PC-9 (cell line): ENCODE measurements at regions of chr9 and their contacts with region 1.

Region 1: DNA sequence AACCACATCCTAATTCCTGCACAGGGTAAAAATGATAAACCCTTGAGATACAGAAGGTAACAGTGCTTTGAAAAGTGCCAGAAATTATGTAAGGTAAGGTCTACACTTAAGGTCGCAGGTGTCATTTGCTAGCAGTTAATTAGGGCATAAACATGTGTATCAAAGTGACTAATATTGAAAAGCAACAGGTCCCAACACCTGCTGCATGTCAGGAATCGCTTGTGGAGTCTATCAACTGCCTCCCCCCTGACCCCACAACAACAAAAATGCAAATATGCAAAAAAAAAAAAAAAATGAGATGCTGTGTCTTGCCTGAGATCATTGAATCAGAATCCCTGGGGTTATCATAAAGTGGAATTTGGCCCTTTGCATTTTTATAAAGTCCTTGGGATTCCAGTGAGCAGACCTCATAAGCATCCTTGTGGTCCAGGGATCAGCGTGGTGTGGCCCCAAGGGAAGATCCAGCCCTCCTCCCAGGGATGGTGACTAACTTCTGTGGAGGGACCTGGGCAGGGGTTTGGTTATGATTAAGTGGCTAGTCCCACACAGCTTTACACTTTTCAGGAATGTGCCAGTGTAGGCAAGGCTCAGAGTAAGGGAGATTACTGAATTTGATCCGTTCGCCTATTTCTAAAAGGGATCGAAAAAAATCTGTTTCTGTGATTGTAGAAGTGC is 92.5 kb upstream of the TNFSF8 start:
- DNase-seq: no peak
- H3K4me3 ChIP-seq: no peak overlapping the region
- H3K27ac ChIP-seq: no peak overlapping the region
- H3K4me1 ChIP-seq: peaks cover 14% of the 10 kb centered on the region
- H3K27me3 ChIP-seq: no peaks in the 10 kb centered on the region
- CTCF ChIP-seq: no peak

Region 2: DNA sequence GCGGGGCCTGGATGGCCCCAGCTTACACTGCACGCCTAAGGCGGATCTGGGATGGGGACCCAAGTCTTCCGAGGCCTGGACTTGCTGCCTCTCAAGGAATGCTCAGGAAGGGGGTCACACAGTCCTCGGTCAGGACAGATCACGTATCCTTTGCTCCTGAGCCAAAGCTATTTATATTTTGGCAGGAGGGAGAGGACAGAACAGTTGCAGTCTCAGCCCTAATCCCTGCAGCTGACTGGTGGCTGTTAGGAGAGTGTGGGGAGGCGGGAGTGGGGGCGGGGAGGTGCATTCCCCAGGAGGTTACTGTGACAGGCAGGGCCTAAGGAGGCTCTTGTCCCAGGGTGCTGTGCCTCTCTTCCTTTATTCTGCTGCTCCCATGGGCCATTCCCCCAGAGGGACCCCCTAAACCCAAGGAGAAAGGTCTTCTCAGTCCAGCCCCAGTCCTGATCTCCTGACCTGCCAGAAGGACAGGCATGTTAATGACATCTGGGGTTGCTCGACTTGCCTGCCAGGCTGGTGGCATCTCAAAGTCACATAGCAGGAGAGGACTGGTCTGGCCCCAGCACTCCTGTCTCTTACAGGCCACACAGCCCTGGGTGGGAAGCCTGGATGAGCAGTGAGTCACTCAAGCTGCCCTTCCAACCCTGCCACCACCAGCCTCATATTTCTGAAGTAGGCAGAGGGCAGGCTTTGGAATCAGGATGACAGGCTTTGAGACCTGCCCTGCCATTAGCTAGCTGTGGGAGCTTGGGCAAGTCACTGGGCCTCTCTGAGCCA is 815.7 kb before region 1 on chr9:
- CTCF ChIA-PET with region 1: no interaction called
- POLR2A ChIA-PET with region 1: interaction called, 10 read pairs
- intact Hi-C with region 1: no loop called
- DNase-seq: peak in 1 of 2 experiments; percentile 59
- H3K4me3 ChIP-seq: no peak overlapping the region
- H3K27ac ChIP-seq: no peak overlapping the region
- H3K4me1 ChIP-seq: no peaks in the 10 kb centered on the region
- H3K27me3 ChIP-seq: no peaks in the 10 kb centered on the region
- CTCF ChIP-seq: no peak

Region 3: DNA sequence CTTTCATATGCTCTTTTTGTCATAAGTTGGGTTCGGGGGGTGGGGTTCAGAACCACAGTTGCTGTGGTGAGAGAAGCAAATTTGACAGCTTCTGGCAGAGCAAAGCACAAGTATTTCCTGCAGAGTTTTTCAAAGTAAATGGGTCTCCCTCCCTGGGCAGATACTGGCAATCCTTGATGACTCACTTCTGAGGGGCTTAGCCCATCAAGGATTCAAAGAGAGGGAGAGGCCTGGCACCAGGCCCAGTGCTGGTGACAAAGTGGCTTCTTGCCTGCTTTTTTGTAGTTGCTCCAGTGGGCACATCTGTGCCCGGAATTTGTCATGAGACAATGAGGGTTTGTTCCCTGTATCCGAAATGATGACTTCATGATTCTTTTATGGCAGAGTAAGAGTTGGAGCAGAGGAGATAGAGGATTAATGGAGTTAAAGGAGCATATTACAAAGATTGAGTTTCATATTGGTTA is 141.6 kb after region 1 on chr9:
- CTCF ChIA-PET with region 1: no interaction called
- POLR2A ChIA-PET with region 1: no interaction called
- intact Hi-C with region 1: loop called (anchors 1 kb)
- DNase-seq: peak; percentile 81 to 84
- H3K4me3 ChIP-seq: no peak overlapping the region
- H3K27ac ChIP-seq: no peak overlapping the region
- H3K4me1 ChIP-seq: peaks cover 23% of the 10 kb centered on the region
- H3K27me3 ChIP-seq: no peaks in the 10 kb centered on the region
- CTCF ChIP-seq: no peak